Psoas muscle (tissue), 8 donors: ENCODE measurements at regions of chr1 and their contacts with region 1.

Region 1: DNA sequence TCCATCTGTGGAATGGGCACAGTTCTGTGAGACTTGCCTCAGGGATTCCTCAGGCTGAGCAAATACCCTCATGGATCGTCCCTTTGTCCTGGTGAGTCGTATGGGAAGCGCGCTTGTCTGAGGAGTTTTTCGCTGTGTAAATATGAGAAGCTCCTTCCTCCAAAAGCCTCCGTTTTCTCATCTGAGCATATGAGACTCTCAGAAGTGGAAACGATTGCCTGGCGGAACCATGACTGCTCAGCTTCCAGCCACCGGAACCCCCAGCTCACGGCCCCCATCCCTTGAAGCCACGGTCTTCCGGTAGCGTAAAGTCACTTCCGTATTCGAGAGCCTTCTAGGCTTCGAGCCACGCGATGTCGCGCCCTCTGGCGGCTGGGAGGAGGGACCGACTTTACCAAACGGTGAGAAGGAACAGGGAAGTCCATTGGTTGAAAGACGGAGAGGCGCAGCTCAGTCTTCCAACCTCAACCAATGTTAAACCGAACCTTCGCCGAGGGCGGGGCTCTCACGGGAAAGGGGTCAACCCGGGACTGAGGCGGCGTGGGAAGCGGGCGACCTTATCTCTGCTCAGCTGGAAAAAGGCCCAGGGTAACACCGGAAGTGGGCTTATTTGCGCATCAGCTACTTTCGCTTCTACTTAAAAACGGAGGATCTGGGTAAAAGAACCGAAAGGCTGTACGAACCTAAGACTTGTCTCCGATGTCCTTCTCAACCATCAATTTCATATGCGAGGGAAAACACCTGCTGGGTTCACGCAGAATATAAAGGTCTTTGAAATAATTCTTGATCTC is 46.2 kb downstream of the AZIN2 start:
- DNase-seq: peak; percentile 99
- ATAC-seq: peak; percentile 92 to 98 (median 94)
- H3K4me3 ChIP-seq: peak overlapping the region; percentile 88
- H3K27ac ChIP-seq: peak overlapping the region; percentile 91
- H3K4me1 ChIP-seq: peaks cover 36% of the 10 kb centered on the region
- H3K27me3 ChIP-seq: peaks cover 0 to 3% (median 0%) of the 10 kb centered on the region in 3 donors
- CTCF ChIP-seq: peak; percentile 89

Region 2: GRCh38 chr1:33169290-33170055 is 42.3 kb after region 1 on chr1:
- intact Hi-C with region 1: loop called in 1 of 2 experiments (anchors 5 kb)
- DNase-seq: no peak
- ATAC-seq: peak; percentile 31 to 42 (median 36)
- H3K4me3 ChIP-seq: no peak overlapping the region
- H3K27ac ChIP-seq: no peak overlapping the region
- H3K4me1 ChIP-seq: peaks cover 12% of the 10 kb centered on the region
- H3K27me3 ChIP-seq: no peaks in the 10 kb centered on the region
- CTCF ChIP-seq: no peak

Region 3: GRCh38 chr1:33256701-33257399 is 129.7 kb after region 1 on chr1:
- intact Hi-C with region 1: no loop called
- DNase-seq: peak; percentile 61 to 74
- ATAC-seq: peak; percentile 39 to 57 (median 49)
- H3K4me3 ChIP-seq: peak overlapping the region; percentile 81
- H3K27ac ChIP-seq: peak overlapping the region; percentile 72
- H3K4me1 ChIP-seq: peaks cover 40% of the 10 kb centered on the region
- H3K27me3 ChIP-seq: no peaks in the 10 kb centered on the region
- CTCF ChIP-seq: no peak

Region 4: GRCh38 chr1:33455539-33456501 is 328.6 kb after region 1 on chr1:
- intact Hi-C with region 1: loop called (anchors 5 to 10 kb)
- DNase-seq: peak; percentile 62 to 79
- ATAC-seq: peak; percentile 87 to 91 (median 88)
- H3K4me3 ChIP-seq: no peak overlapping the region
- H3K27ac ChIP-seq: peak overlapping the region; percentile 62
- H3K4me1 ChIP-seq: peaks cover 15% of the 10 kb centered on the region
- H3K27me3 ChIP-seq: no peaks in the 10 kb centered on the region
- CTCF ChIP-seq: peak; percentile 62